ENCODE measurements at regions of chrX and their contacts with region 1.

Region 1: GRCh38 chrX:154534862-154535670 is 11.6 kb downstream of the G6PD start:
- DNase-seq: peak; percentile 75 to 89 (median 80)
- ATAC-seq: peak; percentile 93
- H3K4me3 ChIP-seq: no peak overlapping the region
- H3K27ac ChIP-seq: 0 out of 3 replicates have a peak overlapping the region, but pooled peaks have one; percentile 15
- H3K4me1 ChIP-seq: peaks cover 2 to 26% of the 10 kb centered on the region in 2 experiments; a peak in 3 of 5 replicates
- H3K27me3 ChIP-seq: no peaks in the 10 kb centered on the region
- CTCF ChIP-seq: peak; percentile 99 to 100 (median 99)
- EP300 ChIP-seq: 0 out of 2 replicates have a peak, but pooled peaks have one; percentile 43
- POLR2A ChIP-seq: 0 out of 2 replicates have a peak, but pooled peaks have one; percentile 13
- RAD21 ChIP-seq: peak; percentile 98 to 99

Region 2: DNA sequence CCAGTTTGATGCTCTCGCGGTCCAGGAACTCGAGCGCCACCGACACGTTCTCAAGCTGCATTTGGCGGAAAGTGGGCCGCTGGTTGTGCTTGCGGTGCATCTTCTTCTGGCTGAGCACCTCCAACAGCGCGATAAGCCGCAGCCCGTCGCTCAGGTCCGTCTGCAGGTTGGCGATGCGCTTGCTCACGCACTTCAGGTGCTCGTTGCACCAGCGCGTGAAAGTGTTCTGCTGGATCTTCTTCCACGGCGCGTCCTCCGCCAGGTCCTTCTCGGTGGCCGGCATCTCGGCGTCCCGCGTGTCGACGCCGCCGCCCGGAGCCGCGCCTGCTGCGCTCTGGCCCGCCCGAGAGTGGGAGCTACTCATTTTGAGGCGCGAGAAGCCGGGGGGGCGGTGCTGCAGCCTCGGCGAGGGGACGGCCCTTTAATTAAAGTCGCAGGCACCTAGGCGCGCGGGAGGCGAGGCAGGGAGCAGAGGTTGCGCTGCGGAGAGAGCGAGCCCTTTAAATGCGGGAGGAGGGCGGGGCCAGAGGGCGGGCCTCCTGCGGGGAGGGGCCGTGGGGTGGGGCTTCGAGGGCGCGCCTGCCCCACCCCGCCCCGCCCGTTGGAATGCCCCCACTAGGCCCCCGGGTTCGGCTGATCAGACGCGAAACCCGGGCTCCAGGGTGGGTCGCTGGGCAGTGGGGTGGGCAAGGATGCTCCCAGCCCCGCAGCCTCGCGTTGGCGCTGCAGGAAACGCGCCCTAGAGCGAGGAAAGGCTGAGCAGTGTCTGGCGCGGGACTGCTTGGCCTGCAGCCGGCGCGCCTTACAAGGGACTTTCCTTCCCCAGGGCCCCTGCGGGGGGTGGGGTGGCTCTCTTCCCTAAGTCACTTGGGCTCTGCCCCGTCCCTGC is 163.9 kb before region 1 on chrX:
- CTCF ChIA-PET with region 1: interaction called, 63 read pairs
- POLR2A ChIA-PET with region 1: interaction called, 3 read pairs
- in situ Hi-C with region 1: loop called (anchors 10 kb)
- intact Hi-C with region 1: loop called (anchors 1 kb)
- DNase-seq: peak; percentile 73 to 97 (median 82)
- ATAC-seq: peak; percentile 84
- H3K4me3 ChIP-seq: peak overlapping the region; percentile 89
- H3K27ac ChIP-seq: peak overlapping the region; percentile 99
- H3K4me1 ChIP-seq: peaks cover 18 to 87% of the 10 kb centered on the region in 2 experiments
- H3K27me3 ChIP-seq: no peaks in the 10 kb centered on the region
- CTCF ChIP-seq: peak in 1 of 3 experiments; percentile 51; a peak in 2 of 6 replicates
- EP300 ChIP-seq: no peak
- POLR2A ChIP-seq: peak; percentile 99
- RAD21 ChIP-seq: no peak

Region 3: GRCh38 chrX:154378782-154379591 is 156.1 kb before region 1 on chrX and contains the start of gene EMD:
- CTCF ChIA-PET with region 1: interaction called, 63 read pairs
- POLR2A ChIA-PET with region 1: interaction called, 4 read pairs
- in situ Hi-C with region 1: loop called (anchors 10 kb)
- intact Hi-C with region 1: no loop called
- DNase-seq: peak; percentile 80 to 98 (median 88)
- ATAC-seq: peak; percentile 92
- H3K4me3 ChIP-seq: peak within 1 kb of the TSS; percentile 91
- H3K27ac ChIP-seq: peak within 1 kb of the TSS; percentile 96
- H3K4me1 ChIP-seq: peaks cover 16 to 57% of the 10 kb centered on the region in 2 experiments
- H3K27me3 ChIP-seq: no peaks in the 10 kb centered on the region
- CTCF ChIP-seq: no peak; a peak in 1 of 6 replicates
- EP300 ChIP-seq: peak; percentile 21; the same call in 1 of the 2 replicates
- POLR2A ChIP-seq: peak; percentile 79
- RAD21 ChIP-seq: no peak
- polyA plus RNA-seq, gene EMD: 2.3 to 3.1 TPM

Region 4: GRCh38 chrX:154384284-154384892 is 150.7 kb before region 1 on chrX:
- CTCF ChIA-PET with region 1: interaction called, 19 read pairs
- POLR2A ChIA-PET with region 1: interaction called, 4 read pairs
- in situ Hi-C with region 1: loop called (anchors 10 kb)
- intact Hi-C with region 1: no loop called
- DNase-seq: peak in 1 of 4 experiments; percentile 45
- ATAC-seq: no peak
- H3K4me3 ChIP-seq: no peak overlapping the region
- H3K27ac ChIP-seq: peak overlapping the region; percentile 36; the same call in 1 of the 3 replicates
- H3K4me1 ChIP-seq: peaks cover 13 to 36% of the 10 kb centered on the region in 2 experiments
- H3K27me3 ChIP-seq: no peaks in the 10 kb centered on the region
- CTCF ChIP-seq: peak; percentile 52 to 57 (median 55); a peak in 5 of 6 replicates
- EP300 ChIP-seq: no peak
- POLR2A ChIP-seq: no peak
- RAD21 ChIP-seq: peak in 1 of 2 experiments; percentile 32; a peak in 2 of 4 replicates

Region 5: GRCh38 chrX:154411322-154411980 is 123.6 kb before region 1 on chrX and contains the start of gene TAFAZZIN:
- CTCF ChIA-PET with region 1: interaction called, 4 read pairs
- POLR2A ChIA-PET with region 1: no interaction called
- in situ Hi-C with region 1: loop called (anchors 10 kb)
- intact Hi-C with region 1: no loop called
- DNase-seq: peak; percentile 77 to 85 (median 80)
- ATAC-seq: peak; percentile 69
- H3K4me3 ChIP-seq: peak within 1 kb of the TSS; percentile 74
- H3K27ac ChIP-seq: peak within 1 kb of the TSS; percentile 80
- H3K4me1 ChIP-seq: peaks cover 13 to 46% of the 10 kb centered on the region in 2 experiments; a peak in 4 of 5 replicates
- H3K27me3 ChIP-seq: no peaks in the 10 kb centered on the region
- CTCF ChIP-seq: no peak
- EP300 ChIP-seq: no peak
- POLR2A ChIP-seq: peak; percentile 88
- RAD21 ChIP-seq: no peak
- polyA plus RNA-seq, gene TAFAZZIN: 0.49 to 0.64 TPM

Region 6: DNA sequence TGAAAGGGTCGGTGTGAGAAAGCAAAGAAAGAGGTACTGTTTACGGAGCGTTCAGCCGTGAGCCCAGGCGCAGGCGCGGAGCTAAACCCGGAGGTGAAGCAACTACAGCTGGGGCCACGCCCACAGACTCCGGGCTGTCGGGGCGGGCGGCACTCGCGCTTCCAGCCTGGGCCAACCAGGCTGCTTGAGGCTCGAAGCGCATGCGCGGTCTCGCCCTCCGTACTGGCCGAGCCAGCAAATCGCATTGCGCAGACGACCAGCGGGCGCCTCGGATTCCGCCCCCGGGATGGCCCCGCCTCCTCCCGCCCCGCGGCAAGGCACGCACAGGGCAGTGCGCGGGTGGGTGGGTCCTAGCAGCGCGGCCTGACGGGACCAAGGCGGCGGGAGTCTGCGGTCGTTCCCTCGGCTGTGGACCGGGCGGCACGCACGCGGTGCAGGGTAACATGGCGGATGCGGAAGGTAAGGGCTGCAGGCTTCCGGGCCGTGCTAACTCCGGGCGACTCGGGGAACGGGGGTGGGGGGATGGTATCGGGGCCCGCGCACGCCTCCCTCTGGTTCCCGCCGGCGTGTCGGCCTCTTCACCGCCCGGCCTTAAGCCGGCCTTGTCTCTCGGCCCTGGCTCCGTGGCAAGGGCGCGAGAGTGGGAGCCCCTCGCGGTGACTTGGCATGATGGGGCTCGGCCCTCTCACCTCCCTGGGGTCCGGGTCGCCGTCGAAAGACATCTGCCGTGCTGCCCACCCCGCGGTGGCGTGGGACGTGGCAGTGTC is 227.6 kb after region 1 on chrX and contains the start of gene DKC1:
- CTCF ChIA-PET with region 1: no interaction called
- POLR2A ChIA-PET with region 1: no interaction called
- in situ Hi-C with region 1: no loop called
- intact Hi-C with region 1: no loop called
- DNase-seq: peak; percentile 91 to 98 (median 94)
- ATAC-seq: peak; percentile 87
- H3K4me3 ChIP-seq: peak within 1 kb of the TSS; percentile 80
- H3K27ac ChIP-seq: peak within 1 kb of the TSS; percentile 95
- H3K4me1 ChIP-seq: peaks cover 10 to 55% of the 10 kb centered on the region in 2 experiments
- H3K27me3 ChIP-seq: no peaks in the 10 kb centered on the region
- CTCF ChIP-seq: no peak
- EP300 ChIP-seq: no peak
- POLR2A ChIP-seq: peak; percentile 91; the same call in 1 of the 2 replicates
- RAD21 ChIP-seq: no peak
- polyA plus RNA-seq, gene DKC1: 209 to 313 TPM